B cell (primary cell): ENCODE measurements at regions of chr18 and their contacts with region 1.

Region 1: GRCh38 chr18:42298759-42299675 is 344.0 kb downstream of the PIK3C3 start:
- DNase-seq: peak; percentile 48
- ATAC-seq: no peak
- H3K4me3 ChIP-seq: no peak overlapping the region
- H3K4me3 Mint-ChIP-seq: no peak overlapping the region
- H3K27ac ChIP-seq: no peak overlapping the region
- H3K27ac Mint-ChIP-seq: no peak overlapping the region
- H3K4me1 ChIP-seq: no peaks in the 10 kb centered on the region
- H3K4me1 Mint-ChIP-seq: no peaks in the 10 kb centered on the region
- H3K27me3 ChIP-seq: peaks cover 0 to 4% (median 0%) of the 10 kb centered on the region in 4 experiments
- H3K27me3 Mint-ChIP-seq: no peaks in the 10 kb centered on the region
- CTCF ChIP-seq: peak; percentile 97

Region 2: DNA sequence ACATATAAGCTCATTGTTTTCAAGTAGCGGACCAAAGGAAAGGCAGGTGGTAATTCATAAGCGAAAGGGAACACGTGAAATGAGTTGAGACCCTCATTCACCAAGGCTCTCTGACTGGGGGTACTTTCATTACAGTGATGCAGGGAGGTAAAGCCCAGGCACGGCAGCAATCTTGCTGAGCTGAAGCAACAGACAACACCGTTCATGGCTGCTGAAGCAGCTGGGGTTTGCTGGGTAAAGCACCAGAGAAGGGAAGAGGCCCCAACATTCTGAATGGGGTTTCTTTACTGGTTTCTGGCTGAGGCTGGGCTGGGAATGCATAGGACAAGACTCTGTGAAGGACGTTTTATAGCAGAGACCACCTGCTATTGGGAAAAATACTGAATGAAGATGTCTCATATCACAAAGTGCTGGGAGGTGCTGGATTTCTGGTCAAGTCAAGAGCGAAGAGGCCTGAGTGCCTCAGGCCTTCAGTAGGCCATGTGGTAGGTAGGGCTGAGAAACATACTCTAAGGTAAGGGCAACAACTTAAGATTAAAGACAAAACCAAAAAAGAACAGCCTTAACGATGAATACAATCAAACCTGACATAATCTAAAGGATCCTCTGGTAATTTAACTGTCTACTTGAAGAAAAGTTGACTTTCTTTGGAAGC is 668.7 kb before region 1 on chr18:
- CTCF ChIA-PET with region 1: no interaction called
- POLR2A ChIA-PET with region 1: no interaction called
- intact Hi-C with region 1: no loop called
- DNase-seq: no peak
- ATAC-seq: no peak
- H3K4me3 ChIP-seq: no peak overlapping the region
- H3K4me3 Mint-ChIP-seq: no peak overlapping the region
- H3K27ac ChIP-seq: no peak overlapping the region
- H3K27ac Mint-ChIP-seq: no peak overlapping the region
- H3K4me1 ChIP-seq: no peaks in the 10 kb centered on the region
- H3K4me1 Mint-ChIP-seq: no peaks in the 10 kb centered on the region
- H3K27me3 ChIP-seq: no peaks in the 10 kb centered on the region
- H3K27me3 Mint-ChIP-seq: no peaks in the 10 kb centered on the region
- CTCF ChIP-seq: no peak

Region 3: DNA sequence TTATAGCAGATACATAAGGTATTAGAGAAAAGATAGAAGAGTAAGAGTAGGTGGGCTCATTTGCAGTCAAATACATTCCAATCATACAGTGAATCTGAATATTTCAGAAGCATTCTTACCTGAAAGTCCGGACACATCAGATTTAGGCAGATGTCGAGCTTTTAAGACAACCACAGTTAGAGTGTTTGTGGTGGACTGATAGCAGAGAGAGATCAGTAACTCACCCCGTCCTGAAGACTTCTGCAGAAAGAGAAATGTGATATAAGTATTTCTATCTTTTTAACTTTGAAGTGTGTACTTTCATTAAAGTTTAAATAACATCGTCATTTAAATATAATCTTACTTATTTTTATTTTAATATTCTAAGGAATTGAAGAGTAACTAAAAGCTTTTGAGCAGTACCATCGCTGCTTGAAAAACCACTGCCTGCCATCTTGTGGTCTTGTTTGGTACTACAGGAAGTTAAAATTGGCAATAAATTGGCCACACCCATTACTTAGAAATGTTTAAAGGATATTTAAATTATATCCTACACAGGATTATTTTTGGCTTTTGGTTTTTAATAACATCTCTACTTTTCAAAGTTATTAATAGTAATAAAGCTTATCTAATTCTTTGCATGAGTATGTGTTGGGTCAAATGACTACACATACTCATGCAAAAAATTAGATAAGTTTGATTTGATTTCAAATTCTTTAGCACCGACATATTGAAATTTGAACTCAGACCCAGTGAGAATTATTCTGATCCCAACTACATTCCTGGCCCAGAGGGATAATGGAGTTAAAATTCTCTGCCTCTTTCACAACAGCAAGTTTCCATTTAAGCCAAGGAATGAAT is 972.8 kb after region 1 on chr18:
- CTCF ChIA-PET with region 1: interaction called, 4 read pairs
- POLR2A ChIA-PET with region 1: no interaction called
- intact Hi-C with region 1: loop called (anchors 5 kb)
- DNase-seq: peak; percentile 35
- ATAC-seq: no peak
- H3K4me3 ChIP-seq: no peak overlapping the region
- H3K4me3 Mint-ChIP-seq: no peak overlapping the region
- H3K27ac ChIP-seq: no peak overlapping the region
- H3K27ac Mint-ChIP-seq: no peak overlapping the region
- H3K4me1 ChIP-seq: no peaks in the 10 kb centered on the region
- H3K4me1 Mint-ChIP-seq: no peaks in the 10 kb centered on the region
- H3K27me3 ChIP-seq: no peaks in the 10 kb centered on the region
- H3K27me3 Mint-ChIP-seq: peaks cover under 1% of the 10 kb centered on the region
- CTCF ChIP-seq: peak; percentile 95